GM10248 (cell line): ENCODE measurements at regions of chr10 and their contacts with region 1.

Region 1: GRCh38 chr10:123200510-123200909 is 46.3 kb downstream of the BUB3 start:
- DNase-seq: no peak
- CTCF ChIP-seq: no peak

Region 2: GRCh38 chr10:123213192-123213591 is 12.7 kb after region 1 on chr10:
- CTCF ChIA-PET with region 1: interaction called, 12 read pairs
- POLR2A ChIA-PET with region 1: no interaction called
- DNase-seq: no peak
- CTCF ChIP-seq: no peak